Psoas muscle (tissue), 8 donors: ENCODE measurements at regions of chr2 and their contacts with region 1.

Region 1: DNA sequence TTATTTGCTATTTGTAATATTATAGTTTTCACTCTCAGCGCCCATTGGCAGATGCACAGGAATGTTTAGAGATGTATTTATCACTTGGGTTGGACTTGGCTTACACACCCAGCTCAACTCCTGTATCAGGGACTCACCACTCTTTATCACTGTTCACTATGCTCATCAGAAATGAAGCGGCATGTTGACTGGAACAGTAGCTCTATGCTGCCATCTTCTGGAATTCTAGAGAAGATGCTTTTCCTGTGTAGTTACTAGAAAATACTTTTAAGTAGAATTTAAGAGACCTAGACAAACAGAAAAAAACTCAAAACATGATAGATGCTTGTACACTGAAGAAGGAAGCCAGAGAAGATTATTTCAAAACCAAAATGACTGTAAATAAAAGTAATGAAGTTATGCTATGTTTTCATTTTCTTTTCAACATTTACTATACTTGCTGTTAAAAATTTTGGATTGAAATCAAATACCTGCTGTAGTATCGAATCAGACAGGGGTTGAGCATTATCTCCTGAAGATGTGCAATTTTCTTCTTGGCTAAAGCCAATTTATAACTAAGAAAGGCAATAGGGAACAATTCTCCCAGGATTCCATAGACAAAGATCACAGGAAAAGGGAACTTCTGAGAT is 47.4 kb upstream of the NXPH2 start:
- DNase-seq: no peak
- ATAC-seq: peak; percentile 52 to 77 (median 66)
- H3K4me3 ChIP-seq: no peak overlapping the region
- H3K27ac ChIP-seq: no peak overlapping the region
- H3K4me1 ChIP-seq: no peaks in the 10 kb centered on the region
- H3K27me3 ChIP-seq: peaks cover 0 to 2% (median 0%) of the 10 kb centered on the region in 3 donors
- CTCF ChIP-seq: peak; percentile 76

Region 2: GRCh38 chr2:137865954-137866540 is 961.5 kb before region 1 on chr2:
- intact Hi-C with region 1: loop called (anchors 5 kb)
- DNase-seq: no peak
- ATAC-seq: no peak
- H3K4me3 ChIP-seq: no peak overlapping the region
- H3K27ac ChIP-seq: no peak overlapping the region
- H3K4me1 ChIP-seq: no peaks in the 10 kb centered on the region
- H3K27me3 ChIP-seq: no peaks in the 10 kb centered on the region
- CTCF ChIP-seq: peak; percentile 53

Region 3: DNA sequence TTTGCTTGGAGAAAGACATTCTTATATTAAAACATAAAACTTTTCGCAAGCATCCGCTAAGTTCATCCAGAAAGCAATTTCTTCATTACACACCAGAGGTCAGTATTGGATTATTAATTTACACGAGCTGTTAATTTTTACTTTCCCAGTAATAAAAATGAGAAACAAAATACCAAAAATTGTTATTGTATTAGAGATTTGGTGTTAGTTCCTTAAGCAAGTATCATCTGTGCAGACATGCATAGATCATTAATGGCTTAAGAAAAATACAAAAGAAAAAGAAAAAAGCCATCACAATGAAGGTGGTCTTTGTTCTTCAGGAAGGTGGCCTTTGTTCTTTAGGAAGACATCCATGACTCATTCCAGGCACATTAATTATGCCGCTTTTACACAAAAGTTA is 916.9 kb before region 1 on chr2:
- intact Hi-C with region 1: loop called (anchors 5 kb)
- DNase-seq: no peak
- ATAC-seq: no peak
- H3K4me3 ChIP-seq: no peak overlapping the region
- H3K27ac ChIP-seq: no peak overlapping the region
- H3K4me1 ChIP-seq: no peaks in the 10 kb centered on the region
- H3K27me3 ChIP-seq: no peaks in the 10 kb centered on the region
- CTCF ChIP-seq: peak; percentile 61

Region 4: GRCh38 chr2:138787053-138787666 is 40.4 kb before region 1 on chr2:
- intact Hi-C with region 1: no loop called
- DNase-seq: no peak
- ATAC-seq: peak in 2 of 4 donors; percentile 48 to 60
- H3K4me3 ChIP-seq: no peak overlapping the region
- H3K27ac ChIP-seq: no peak overlapping the region
- H3K4me1 ChIP-seq: no peaks in the 10 kb centered on the region
- H3K27me3 ChIP-seq: no peaks in the 10 kb centered on the region
- CTCF ChIP-seq: peak; percentile 73

Region 5: DNA sequence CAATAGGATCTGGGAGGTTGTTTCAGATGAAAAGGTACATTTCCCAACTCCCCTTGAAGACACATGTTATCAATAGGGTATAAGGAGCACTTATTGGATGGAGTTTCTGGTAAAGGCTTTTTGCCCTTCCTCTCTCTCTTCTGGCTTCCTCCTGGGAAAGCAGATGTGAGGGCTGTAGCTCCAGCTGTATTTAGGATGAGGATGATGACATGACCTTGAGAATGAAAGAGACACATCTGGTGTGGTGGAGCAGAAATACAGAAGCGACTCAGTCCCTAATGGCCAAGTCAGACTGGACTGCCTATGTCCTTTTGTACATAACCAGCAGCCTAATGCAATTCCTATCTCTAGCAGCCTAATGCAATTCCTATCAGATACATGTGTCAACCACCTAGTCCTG is 53.6 kb after region 1 on chr2:
- intact Hi-C with region 1: no loop called
- DNase-seq: no peak
- ATAC-seq: no peak
- H3K4me3 ChIP-seq: no peak overlapping the region
- H3K27ac ChIP-seq: no peak overlapping the region
- H3K4me1 ChIP-seq: no peaks in the 10 kb centered on the region
- H3K27me3 ChIP-seq: no peaks in the 10 kb centered on the region
- CTCF ChIP-seq: no peak